ENCODE measurements at regions of chr3 and their contacts with region 1.

Region 1: DNA sequence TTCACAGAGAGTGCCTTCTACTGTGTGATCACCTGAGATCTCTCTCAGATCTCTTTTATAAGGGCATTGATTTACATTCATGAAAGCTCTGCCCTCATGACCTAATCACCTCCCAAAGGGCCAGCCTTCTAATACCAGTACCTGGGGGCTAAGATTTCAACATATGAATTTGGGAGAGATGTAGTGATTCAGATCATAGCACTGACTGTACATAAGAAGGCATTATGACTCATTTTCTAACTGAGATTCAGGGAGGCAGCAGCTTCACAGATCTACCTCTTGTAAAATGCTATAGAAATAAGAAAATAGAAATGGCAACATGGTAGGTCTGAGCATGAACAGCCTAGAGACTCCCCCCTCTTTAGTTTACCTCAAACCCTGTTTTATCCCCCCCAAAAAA is 39.6 kb downstream of the VGLL3 start:
- DNase-seq: peak; percentile 83
- ATAC-seq: peak; percentile 77
- H3K4me3 ChIP-seq: no peak overlapping the region
- H3K27ac ChIP-seq: peak overlapping the region; percentile 31
- H3K4me1 ChIP-seq: peaks cover 41% of the 10 kb centered on the region
- H3K27me3 ChIP-seq: no peaks in the 10 kb centered on the region
- CTCF ChIP-seq: no peak

Region 2: GRCh38 chr3:86865506-86865905 is 85.8 kb before region 1 on chr3:
- CTCF ChIA-PET with region 1: no interaction called
- POLR2A ChIA-PET with region 1: no interaction called
- intact Hi-C with region 1: loop called (anchors 1 kb)
- DNase-seq: no peak
- ATAC-seq: no peak
- H3K4me3 ChIP-seq: no peak overlapping the region
- H3K27ac ChIP-seq: no peak overlapping the region
- H3K4me1 ChIP-seq: no peaks in the 10 kb centered on the region
- H3K27me3 ChIP-seq: no peaks in the 10 kb centered on the region
- CTCF ChIP-seq: no peak

Region 3: GRCh38 chr3:86890741-86891396 is 60.5 kb before region 1 on chr3:
- CTCF ChIA-PET with region 1: no interaction called
- POLR2A ChIA-PET with region 1: no interaction called
- intact Hi-C with region 1: no loop called
- DNase-seq: no peak
- ATAC-seq: no peak
- H3K4me3 ChIP-seq: no peak overlapping the region
- H3K27ac ChIP-seq: no peak overlapping the region
- H3K4me1 ChIP-seq: peaks cover 8% of the 10 kb centered on the region
- H3K27me3 ChIP-seq: no peaks in the 10 kb centered on the region
- CTCF ChIP-seq: no peak

Region 4: GRCh38 chr3:86990734-86991481 is 39.6 kb after region 1 on chr3 and contains the start of gene VGLL3:
- CTCF ChIA-PET with region 1: no interaction called
- POLR2A ChIA-PET with region 1: interaction called, 4 read pairs
- intact Hi-C with region 1: loop called (anchors 5 kb)
- DNase-seq: peak; percentile 55
- ATAC-seq: peak; percentile 70
- H3K4me3 ChIP-seq: peak within 1 kb of the TSS; percentile 85
- H3K27ac ChIP-seq: peak within 1 kb of the TSS; percentile 4; the same call in 1 of the 2 replicates
- H3K4me1 ChIP-seq: peaks cover 42% of the 10 kb centered on the region
- H3K27me3 ChIP-seq: no peaks in the 10 kb centered on the region
- CTCF ChIP-seq: 0 out of 2 replicates have a peak, but pooled peaks have one; percentile 10
- total RNA-seq, gene VGLL3: 1.3 and 1.8 TPM in 2 replicates

Measured in PC-3 (cell line).